Heart right ventricle (tissue), 16 donors: ENCODE measurements at regions of chr3 and their contacts with region 1.

Region 1: DNA sequence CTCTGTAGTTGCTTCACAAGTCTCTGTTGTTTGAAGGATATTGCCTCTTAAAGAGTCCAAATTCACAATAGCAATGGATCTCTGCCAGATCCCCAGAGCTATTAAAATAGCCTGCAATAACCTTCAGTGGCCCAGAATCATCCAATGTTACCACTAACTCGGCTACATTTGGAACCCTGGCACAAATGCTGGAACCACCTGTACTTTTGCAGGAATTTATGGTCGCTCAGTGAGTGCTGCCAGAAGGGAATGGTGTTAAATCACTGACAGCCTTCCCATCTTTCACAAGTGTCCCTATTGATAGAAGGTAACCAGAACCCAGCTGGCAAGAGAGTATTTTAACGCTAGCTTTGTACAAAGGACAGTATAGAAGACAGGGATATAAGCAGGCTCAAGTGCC is 298.8 kb upstream of the PLSCR5 start:
- DNase-seq: peak in 1 of 2 donors; percentile 47
- ATAC-seq: peak in 7 of 8 donors; percentile 76 to 99 (median 96)
- H3K4me3 ChIP-seq: no peak overlapping the region
- H3K27ac ChIP-seq: peak overlapping the region in 6 of 10 donors; percentile 24 to 61 (median 42)
- H3K4me1 ChIP-seq: peaks cover 0 to 8% (median 0%) of the 10 kb centered on the region in 9 donors
- H3K27me3 ChIP-seq: no peaks in the 10 kb centered on the region
- CTCF ChIP-seq: no peak

Region 2: DNA sequence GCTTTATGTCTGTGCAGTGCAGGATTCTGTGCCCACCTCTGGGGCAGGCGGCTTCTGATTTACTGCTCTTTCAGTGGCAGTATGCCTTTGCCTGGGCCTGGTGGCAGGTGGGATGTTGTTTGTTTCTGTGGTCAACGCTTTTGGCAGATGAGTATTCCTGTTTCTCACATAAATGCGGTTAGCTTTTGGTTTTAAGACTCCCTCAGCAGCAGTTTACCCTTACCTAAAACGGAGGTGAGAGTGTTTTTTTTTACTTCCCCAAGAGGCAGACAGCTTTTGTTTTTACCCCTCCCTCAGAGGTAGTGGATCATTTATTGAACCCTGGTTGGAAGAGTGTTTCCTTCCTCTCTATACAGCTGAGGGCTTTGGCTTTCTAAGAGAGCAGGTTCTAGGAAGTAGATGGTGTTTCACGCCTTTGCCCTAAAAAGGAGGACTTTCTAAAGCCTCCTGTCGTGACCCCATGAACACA is 164.7 kb before region 1 on chr3:
- intact Hi-C with region 1: no loop called
- DNase-seq: no peak
- ATAC-seq: no peak
- H3K4me3 ChIP-seq: no peak overlapping the region
- H3K27ac ChIP-seq: no peak overlapping the region
- H3K4me1 ChIP-seq: no peaks in the 10 kb centered on the region
- H3K27me3 ChIP-seq: no peaks in the 10 kb centered on the region
- CTCF ChIP-seq: no peak

Region 3: DNA sequence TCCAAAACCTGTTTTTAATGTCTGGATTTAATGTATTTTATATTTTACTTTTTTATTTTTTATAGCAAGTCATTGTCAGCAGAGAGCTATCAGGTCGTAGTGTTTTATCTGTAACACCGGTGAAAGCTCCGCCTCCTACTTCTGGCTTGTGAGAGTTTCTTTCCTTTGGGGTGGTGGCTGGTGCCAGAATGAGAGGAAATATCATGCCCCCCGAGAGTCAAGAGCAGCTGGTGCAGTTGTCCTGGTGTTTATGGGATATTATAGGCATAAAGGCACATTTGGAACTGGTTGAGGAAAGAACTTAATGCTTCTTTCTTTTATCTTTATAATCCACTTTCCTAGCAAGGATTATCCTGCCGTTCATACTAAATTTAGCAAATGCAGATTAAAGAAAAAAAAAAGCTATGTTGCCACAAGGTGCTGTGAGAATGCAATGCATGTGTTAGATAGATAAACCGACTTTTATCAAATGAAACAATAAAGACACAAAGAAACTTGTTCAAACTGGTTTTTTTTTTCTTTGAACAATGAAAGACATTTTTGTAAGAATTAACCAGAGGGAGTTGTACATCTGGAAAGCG is 38.7 kb before region 1 on chr3:
- intact Hi-C with region 1: loop called in 1 of 10 experiments (anchors 5 kb)
- DNase-seq: no peak
- ATAC-seq: no peak
- H3K4me3 ChIP-seq: no peak overlapping the region
- H3K27ac ChIP-seq: no peak overlapping the region
- H3K4me1 ChIP-seq: peaks cover 0 to 7% (median 0%) of the 10 kb centered on the region in 9 donors
- H3K27me3 ChIP-seq: no peaks in the 10 kb centered on the region
- CTCF ChIP-seq: no peak

Region 4: GRCh38 chr3:147200545-147200944 is 296.6 kb after region 1 on chr3:
- intact Hi-C with region 1: no loop called
- DNase-seq: no peak
- ATAC-seq: no peak
- H3K4me3 ChIP-seq: no peak overlapping the region
- H3K27ac ChIP-seq: no peak overlapping the region
- H3K4me1 ChIP-seq: no peaks in the 10 kb centered on the region
- H3K27me3 ChIP-seq: peaks cover 0 to 2% (median 0%) of the 10 kb centered on the region in 7 donors
- CTCF ChIP-seq: no peak